Posterior cingulate gyrus (tissue), 11 donors: ENCODE measurements at regions of chr1 and their contacts with region 1.

Region 1: DNA sequence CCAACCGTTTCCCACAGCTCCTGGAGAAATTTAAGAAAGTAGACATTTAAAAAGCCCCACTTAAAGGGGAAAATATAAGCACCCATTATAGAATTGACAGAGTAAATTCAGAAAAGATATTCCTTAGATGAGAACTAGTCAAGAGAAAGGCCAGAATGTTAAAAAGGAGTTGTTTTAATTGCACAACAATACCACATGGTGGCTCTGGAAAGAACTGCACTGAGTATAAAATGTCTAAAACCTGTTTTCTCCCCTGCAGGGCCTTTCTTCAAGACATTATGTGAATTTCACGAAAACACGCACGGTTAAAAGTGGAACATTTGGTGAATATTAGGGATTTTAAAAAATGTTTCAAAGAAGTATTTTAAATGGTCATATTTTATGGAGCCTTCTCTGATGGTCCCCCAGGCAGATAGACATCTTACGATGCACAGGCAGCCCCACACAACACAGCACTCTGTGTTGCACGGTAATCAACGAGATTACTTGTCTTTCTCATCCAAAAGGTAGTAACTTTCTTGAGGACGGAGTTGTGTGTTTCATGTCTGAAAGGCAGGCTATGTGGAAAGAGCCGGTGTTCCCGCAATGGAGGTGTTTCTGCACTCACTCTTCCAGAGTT is 101.9 kb downstream of the PRRX1 start:
- DNase-seq: no peak

Region 2: GRCh38 chr1:169624912-169625311 is 1140.9 kb before region 1 on chr1:
- intact Hi-C with region 1: loop called (anchors 5 kb)
- DNase-seq: no peak

Region 3: DNA sequence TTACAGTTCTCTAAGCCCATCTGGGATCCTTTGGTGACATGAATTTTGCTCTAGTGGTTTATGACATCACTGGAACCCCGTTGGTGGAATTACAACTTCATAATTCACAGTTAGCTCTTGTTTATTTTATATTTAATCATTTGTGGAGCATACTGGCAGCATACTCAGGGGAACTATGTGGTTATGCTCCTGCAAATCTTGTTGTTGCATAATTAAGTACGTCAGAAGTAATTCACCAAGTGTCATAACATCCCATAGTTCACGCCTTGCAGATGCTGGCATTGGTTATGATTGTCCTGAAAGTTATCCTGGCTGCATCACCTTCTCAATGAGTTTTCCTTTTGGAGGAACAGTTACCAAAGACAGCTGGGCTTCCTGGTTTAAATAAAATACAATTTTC is 85.4 kb before region 1 on chr1:
- intact Hi-C with region 1: no loop called
- DNase-seq: no peak

Region 4: DNA sequence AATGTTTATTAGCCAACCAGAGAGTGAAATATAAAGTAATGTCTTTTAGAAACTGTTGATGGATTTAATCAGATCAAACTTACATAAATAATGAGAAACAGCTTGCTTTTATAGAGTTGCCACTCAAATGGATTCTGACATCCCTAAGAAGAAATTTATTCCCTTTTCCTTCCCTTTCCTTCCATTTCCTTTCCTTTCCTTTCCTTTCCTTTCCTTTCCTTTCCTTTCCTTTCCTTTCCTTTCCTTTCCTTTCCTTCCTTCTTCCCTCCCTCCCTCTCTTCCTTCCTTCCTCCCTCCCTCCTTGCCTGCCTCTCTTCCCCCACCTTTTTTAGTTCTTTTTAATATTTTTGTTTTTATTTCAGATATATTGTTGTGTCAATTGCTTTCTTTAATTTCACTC is 74.6 kb before region 1 on chr1:
- intact Hi-C with region 1: loop called (anchors 2 kb)
- DNase-seq: no peak

Region 5: GRCh38 chr1:171017426-171017825 is 251.6 kb after region 1 on chr1:
- intact Hi-C with region 1: no loop called
- DNase-seq: peak in 1 of 10 donors; percentile 47

Region 6: GRCh38 chr1:171055966-171056643 is 290.3 kb after region 1 on chr1:
- intact Hi-C with region 1: no loop called
- DNase-seq: peak in 1 of 10 donors; percentile 46